Caco-2 (cell line): ENCODE measurements at regions of chr1 and their contacts with region 1.

Region 1: GRCh38 chr1:55277377-55278130 is 62.4 kb upstream of the USP24 start:
- DNase-seq: peak; percentile 73 to 74
- H3K4me3 ChIP-seq: no peak overlapping the region
- H3K4me3 Mint-ChIP-seq: no peak overlapping the region
- H3K27ac Mint-ChIP-seq: no peak overlapping the region
- H3K4me1 ChIP-seq: no peaks in the 10 kb centered on the region
- H3K4me1 Mint-ChIP-seq: peaks cover 5% of the 10 kb centered on the region
- H3K27me3 ChIP-seq: no peaks in the 10 kb centered on the region
- H3K27me3 Mint-ChIP-seq: no peaks in the 10 kb centered on the region
- CTCF ChIP-seq: peak; percentile 60 to 66

Region 2: GRCh38 chr1:55071477-55071876 is 206.1 kb before region 1 on chr1:
- CTCF ChIA-PET with region 1: interaction called, 6 read pairs
- POLR2A ChIA-PET with region 1: no interaction called
- intact Hi-C with region 1: loop called (anchors 2 kb)
- DNase-seq: peak; percentile 58 to 61
- H3K4me3 ChIP-seq: no peak overlapping the region
- H3K4me3 Mint-ChIP-seq: no peak overlapping the region
- H3K27ac Mint-ChIP-seq: no peak overlapping the region
- H3K4me1 ChIP-seq: no peaks in the 10 kb centered on the region
- H3K4me1 Mint-ChIP-seq: no peaks in the 10 kb centered on the region
- H3K27me3 ChIP-seq: no peaks in the 10 kb centered on the region
- H3K27me3 Mint-ChIP-seq: no peaks in the 10 kb centered on the region
- CTCF ChIP-seq: peak; percentile 44 to 59

Region 3: GRCh38 chr1:55140546-55140983 is 137.0 kb before region 1 on chr1:
- CTCF ChIA-PET with region 1: interaction called, 20 read pairs
- POLR2A ChIA-PET with region 1: no interaction called
- intact Hi-C with region 1: loop called (anchors 1 kb)
- DNase-seq: peak; percentile 38 to 58
- H3K4me3 ChIP-seq: no peak overlapping the region
- H3K4me3 Mint-ChIP-seq: no peak overlapping the region
- H3K27ac Mint-ChIP-seq: no peak overlapping the region
- H3K4me1 ChIP-seq: no peaks in the 10 kb centered on the region
- H3K4me1 Mint-ChIP-seq: no peaks in the 10 kb centered on the region
- H3K27me3 ChIP-seq: no peaks in the 10 kb centered on the region
- H3K27me3 Mint-ChIP-seq: no peaks in the 10 kb centered on the region
- CTCF ChIP-seq: peak; percentile 59 to 65

Region 4: GRCh38 chr1:55155514-55155913 is 122.0 kb before region 1 on chr1:
- CTCF ChIA-PET with region 1: no interaction called
- POLR2A ChIA-PET with region 1: no interaction called
- intact Hi-C with region 1: no loop called
- DNase-seq: no peak
- H3K4me3 ChIP-seq: no peak overlapping the region
- H3K4me3 Mint-ChIP-seq: no peak overlapping the region
- H3K27ac Mint-ChIP-seq: no peak overlapping the region
- H3K4me1 ChIP-seq: no peaks in the 10 kb centered on the region
- H3K4me1 Mint-ChIP-seq: no peaks in the 10 kb centered on the region
- H3K27me3 ChIP-seq: no peaks in the 10 kb centered on the region
- H3K27me3 Mint-ChIP-seq: no peaks in the 10 kb centered on the region
- CTCF ChIP-seq: no peak

Region 5: DNA sequence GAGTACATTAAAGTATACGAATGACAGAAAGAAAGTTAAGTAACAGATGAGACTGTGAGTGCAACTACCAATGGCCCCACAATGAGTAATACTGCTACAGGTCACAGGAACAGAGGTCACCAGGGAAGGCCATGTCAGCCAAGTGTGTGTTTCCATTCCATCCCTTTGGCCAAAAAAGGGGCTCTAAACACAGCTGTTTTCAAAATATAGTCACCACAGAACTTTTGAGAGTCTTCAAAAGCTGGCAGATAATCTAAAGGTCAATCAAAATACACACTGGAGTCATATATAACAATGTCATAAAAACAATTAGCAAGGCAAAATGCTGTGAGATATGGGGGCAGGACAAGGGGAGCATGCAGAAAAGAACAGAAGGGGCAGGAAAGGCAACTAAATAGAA is 72.6 kb before region 1 on chr1:
- CTCF ChIA-PET with region 1: no interaction called
- POLR2A ChIA-PET with region 1: no interaction called
- intact Hi-C with region 1: loop called (anchors 5 kb)
- DNase-seq: no peak
- H3K4me3 ChIP-seq: no peak overlapping the region
- H3K4me3 Mint-ChIP-seq: no peak overlapping the region
- H3K27ac Mint-ChIP-seq: no peak overlapping the region
- H3K4me1 ChIP-seq: 0 out of 2 replicates have a peak, but pooled peaks cover 7% of the 10 kb centered on the region
- H3K4me1 Mint-ChIP-seq: no peaks in the 10 kb centered on the region
- H3K27me3 ChIP-seq: no peaks in the 10 kb centered on the region
- H3K27me3 Mint-ChIP-seq: no peaks in the 10 kb centered on the region
- CTCF ChIP-seq: no peak